ENCODE measurements at regions of chr9 and their contacts with region 1.

Region 1: DNA sequence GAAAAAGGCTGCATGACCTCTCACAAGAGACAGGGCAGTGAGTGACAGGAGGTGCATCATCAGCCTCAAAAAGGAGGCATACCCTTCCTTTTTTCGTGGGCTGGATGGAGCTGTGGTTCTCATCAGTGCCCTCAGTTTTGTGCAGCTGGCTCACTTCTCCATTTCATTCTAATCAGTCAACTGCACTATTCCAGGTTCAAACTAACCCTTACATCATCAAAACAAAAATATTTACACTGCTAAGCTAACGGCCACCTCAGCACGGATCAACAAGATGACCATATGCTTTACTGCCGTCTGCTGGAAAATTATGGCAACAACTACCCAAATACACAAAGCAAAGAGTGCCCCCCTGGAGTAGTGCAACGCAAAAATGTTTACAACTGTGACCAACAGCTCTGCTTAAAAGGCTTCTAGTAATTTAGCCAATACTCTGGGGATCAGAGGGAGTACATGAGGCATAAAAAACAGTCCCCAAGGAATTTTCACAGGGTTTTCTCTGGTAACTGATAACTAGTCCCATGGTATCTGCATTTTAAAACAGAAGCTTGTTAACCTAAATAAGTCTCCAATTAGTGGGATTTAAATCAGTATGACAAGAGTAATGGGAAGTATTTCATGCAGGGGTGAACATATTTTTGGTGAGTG is 10.8 kb downstream of the KCNV2 start:
- DNase-seq: no peak
- H3K4me3 Mint-ChIP-seq: no peak overlapping the region
- H3K27ac Mint-ChIP-seq: no peak overlapping the region
- H3K4me1 Mint-ChIP-seq: no peaks in the 10 kb centered on the region
- H3K27me3 Mint-ChIP-seq: no peaks in the 10 kb centered on the region

Region 2: GRCh38 chr9:2469681-2470221 is 258.3 kb before region 1 on chr9:
- CTCF ChIA-PET with region 1: no interaction called
- POLR2A ChIA-PET with region 1: no interaction called
- intact Hi-C with region 1: loop called (anchors 2 kb)
- DNase-seq: peak; percentile 37
- H3K4me3 Mint-ChIP-seq: no peak overlapping the region
- H3K27ac Mint-ChIP-seq: no peak overlapping the region
- H3K4me1 Mint-ChIP-seq: no peaks in the 10 kb centered on the region
- H3K27me3 Mint-ChIP-seq: peaks cover 15% of the 10 kb centered on the region

Region 3: GRCh38 chr9:2620919-2621679 is 107.0 kb before region 1 on chr9:
- CTCF ChIA-PET with region 1: interaction called, 4 read pairs
- POLR2A ChIA-PET with region 1: no interaction called
- intact Hi-C with region 1: loop called (anchors 10 kb)
- DNase-seq: peak; percentile 86
- H3K4me3 Mint-ChIP-seq: peak overlapping the region; percentile 75
- H3K27ac Mint-ChIP-seq: peak overlapping the region; percentile 28
- H3K4me1 Mint-ChIP-seq: peaks cover 14% of the 10 kb centered on the region
- H3K27me3 Mint-ChIP-seq: peaks cover 49% of the 10 kb centered on the region